PC-3 (cell line): ENCODE measurements at regions of chr12 and their contacts with region 1.

Region 1: GRCh38 chr12:13864081-13864673 is 117.2 kb downstream of the GRIN2B start:
- DNase-seq: peak; percentile 61
- ATAC-seq: peak; percentile 58; the same call in 1 of the 2 replicates
- H3K4me3 ChIP-seq: no peak overlapping the region
- H3K27ac ChIP-seq: no peak overlapping the region
- H3K4me1 ChIP-seq: no peaks in the 10 kb centered on the region
- H3K27me3 ChIP-seq: peaks cover 31% of the 10 kb centered on the region
- CTCF ChIP-seq: peak; percentile 78

Region 2: DNA sequence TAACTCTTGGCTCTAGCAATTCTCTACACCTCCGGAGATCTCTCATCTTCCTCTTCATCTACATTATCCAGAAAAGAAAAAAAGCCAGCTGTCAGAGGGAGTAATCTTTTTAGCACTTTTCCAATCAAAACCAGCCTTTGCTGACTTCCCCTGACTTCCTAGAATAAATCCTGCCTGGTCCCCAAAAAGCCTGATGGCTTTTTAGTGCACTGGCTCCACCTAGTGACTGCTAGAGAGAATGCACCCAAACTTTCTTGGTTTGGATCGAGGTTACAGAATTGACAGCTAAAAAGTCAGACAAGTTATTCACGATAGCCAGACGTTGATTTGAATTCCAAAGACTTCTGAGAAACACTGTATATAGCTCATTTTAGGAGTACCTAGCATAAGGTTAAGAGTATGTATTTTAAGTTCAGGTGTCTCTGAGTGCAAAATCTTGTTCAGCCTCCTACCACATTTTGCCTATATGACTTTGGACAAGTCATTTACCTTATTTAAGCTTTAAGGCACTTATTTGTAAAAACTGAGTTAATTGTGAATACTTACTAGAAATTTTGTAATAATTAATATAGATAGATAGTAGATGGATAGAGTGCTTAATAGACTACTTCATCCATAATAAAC is 302.9 kb after region 1 on chr12:
- CTCF ChIA-PET with region 1: interaction called, 7 read pairs
- POLR2A ChIA-PET with region 1: no interaction called
- intact Hi-C with region 1: loop called (anchors 1 kb)
- DNase-seq: peak; percentile 73
- ATAC-seq: no peak
- H3K4me3 ChIP-seq: no peak overlapping the region
- H3K27ac ChIP-seq: no peak overlapping the region
- H3K4me1 ChIP-seq: no peaks in the 10 kb centered on the region
- H3K27me3 ChIP-seq: no peaks in the 10 kb centered on the region
- CTCF ChIP-seq: peak; percentile 86